ENCODE measurements at regions of chr7 and their contacts with region 1.

Region 1: GRCh38 chr7:97179454-97180104 is 62.1 kb downstream of the SDHAF3 start:
- DNase-seq: peak; percentile 28
- H3K4me3 ChIP-seq: no peak overlapping the region
- H3K27ac ChIP-seq: no peak overlapping the region
- H3K4me1 ChIP-seq: no peaks in the 10 kb centered on the region
- H3K27me3 ChIP-seq: no peaks in the 10 kb centered on the region
- CTCF ChIP-seq: peak; percentile 74

Region 2: DNA sequence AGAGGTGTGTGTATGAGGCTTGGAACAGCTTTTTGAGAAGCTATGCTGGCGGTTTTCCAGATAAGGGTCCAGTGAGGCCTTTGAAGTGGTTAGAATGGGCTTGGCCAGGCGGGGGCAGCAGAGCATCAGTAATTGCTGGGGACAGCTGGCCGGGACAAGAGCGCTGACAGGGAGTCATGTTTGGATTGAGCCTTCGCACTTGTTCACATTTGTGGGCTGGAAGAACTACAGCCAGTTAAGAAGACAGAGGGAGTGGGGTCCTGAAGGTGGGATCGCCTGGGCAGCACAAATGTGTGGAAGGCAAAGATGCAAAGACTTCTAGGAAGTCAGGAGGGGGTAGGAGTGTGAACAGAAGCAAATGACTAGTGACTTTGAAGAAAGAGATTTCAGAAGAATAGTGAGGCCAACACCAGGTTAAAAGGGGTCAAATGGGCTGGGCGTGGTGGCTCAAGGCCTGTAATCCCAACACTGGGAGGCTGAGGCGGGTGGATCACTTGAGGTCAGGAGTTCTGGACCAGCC is 74.8 kb before region 1 on chr7:
- intact Hi-C with region 1: loop called (anchors 2 kb)
- DNase-seq: peak; percentile 84
- H3K4me3 ChIP-seq: no peak overlapping the region
- H3K27ac ChIP-seq: no peak overlapping the region
- H3K4me1 ChIP-seq: no peaks in the 10 kb centered on the region
- H3K27me3 ChIP-seq: no peaks in the 10 kb centered on the region
- CTCF ChIP-seq: peak; percentile 85